Naive thymus-derived CD4-positive, alpha-beta T cell (primary cell): ENCODE measurements at regions of chrX and their contacts with region 1.

Region 1: GRCh38 chrX:42943051-42943974 is 165.3 kb upstream of the PPP1R2C start:
- DNase-seq: peak in 6 of 9 donors; percentile 22 to 50 (median 44)
- ATAC-seq: peak; percentile 60
- H3K4me3 ChIP-seq: peak overlapping the region; percentile 33
- H3K4me3 Mint-ChIP-seq: peak overlapping the region; percentile 41 to 83 (median 70)
- H3K27ac ChIP-seq: peak overlapping the region; percentile 56
- H3K27ac Mint-ChIP-seq: peak overlapping the region; percentile 77 to 98 (median 94)
- H3K4me1 ChIP-seq: peaks cover 58 to 84% of the 10 kb centered on the region in 2 donors
- H3K4me1 Mint-ChIP-seq: peaks cover 21 to 98% (median 88%) of the 10 kb centered on the region in 7 donors
- H3K27me3 ChIP-seq: no peaks in the 10 kb centered on the region
- H3K27me3 Mint-ChIP-seq: no peaks in the 10 kb centered on the region

Region 2: GRCh38 chrX:41781502-41781901 is 1161.8 kb before region 1 on chrX:
- CTCF ChIA-PET with region 1: no interaction called
- POLR2A ChIA-PET with region 1: no interaction called
- intact Hi-C with region 1: loop called in 1 of 2 experiments (anchors 5 kb)
- DNase-seq: peak in 6 of 9 donors; percentile 12 to 34 (median 24)
- ATAC-seq: peak; percentile 67
- H3K4me3 ChIP-seq: no peak overlapping the region
- H3K4me3 Mint-ChIP-seq: peak overlapping the region in 1 of 10 donors; percentile 6
- H3K27ac ChIP-seq: no peak overlapping the region
- H3K27ac Mint-ChIP-seq: peak overlapping the region in 1 of 9 donors; percentile 70
- H3K4me1 ChIP-seq: no peaks in the 10 kb centered on the region
- H3K4me1 Mint-ChIP-seq: peaks cover 0 to 24% (median 7%) of the 10 kb centered on the region in 7 donors
- H3K27me3 ChIP-seq: no peaks in the 10 kb centered on the region
- H3K27me3 Mint-ChIP-seq: no peaks in the 10 kb centered on the region

Region 3: DNA sequence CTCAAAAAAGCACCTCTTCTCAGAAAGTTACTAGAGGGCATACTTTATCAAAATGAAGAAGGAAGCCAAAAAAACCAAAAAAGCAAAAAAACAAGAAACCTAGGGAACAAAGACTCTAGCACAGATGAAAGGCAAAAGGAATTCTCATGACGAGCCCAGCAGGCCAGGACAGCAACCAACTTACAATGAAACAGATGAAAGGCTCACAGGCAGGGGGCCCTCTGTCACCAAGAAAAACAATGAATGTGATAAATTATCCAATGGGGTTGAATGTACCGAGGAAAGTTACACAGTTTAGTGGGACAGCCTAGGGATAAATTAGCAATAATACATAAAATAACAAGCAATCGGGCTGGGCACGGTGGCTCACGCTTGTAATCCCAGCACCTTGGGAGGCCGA is 1140.4 kb before region 1 on chrX:
- CTCF ChIA-PET with region 1: interaction called, 11 read pairs
- POLR2A ChIA-PET with region 1: interaction called, 5 read pairs
- intact Hi-C with region 1: loop called in 1 of 2 experiments (anchors 1 kb)
- DNase-seq: no peak
- ATAC-seq: no peak
- H3K4me3 ChIP-seq: no peak overlapping the region
- H3K4me3 Mint-ChIP-seq: no peak overlapping the region
- H3K27ac ChIP-seq: no peak overlapping the region
- H3K27ac Mint-ChIP-seq: peak overlapping the region in 1 of 9 donors; percentile 3
- H3K4me1 ChIP-seq: peaks cover 0 to 3% of the 10 kb centered on the region in 2 donors
- H3K4me1 Mint-ChIP-seq: peaks cover 5 to 45% (median 16%) of the 10 kb centered on the region in 7 donors
- H3K27me3 ChIP-seq: no peaks in the 10 kb centered on the region
- H3K27me3 Mint-ChIP-seq: no peaks in the 10 kb centered on the region

Region 4: GRCh38 chrX:42128020-42128419 is 815.3 kb before region 1 on chrX:
- CTCF ChIA-PET with region 1: no interaction called
- POLR2A ChIA-PET with region 1: no interaction called
- intact Hi-C with region 1: loop called in 1 of 2 experiments (anchors 10 kb)
- DNase-seq: peak in 1 of 9 donors; percentile 7
- ATAC-seq: peak; percentile 44
- H3K4me3 ChIP-seq: no peak overlapping the region
- H3K4me3 Mint-ChIP-seq: peak overlapping the region in 6 of 10 donors; percentile 2 to 72 (median 33)
- H3K27ac ChIP-seq: no peak overlapping the region
- H3K27ac Mint-ChIP-seq: peak overlapping the region in 7 of 9 donors; percentile 9 to 92 (median 62)
- H3K4me1 ChIP-seq: peaks cover 9 to 20% of the 10 kb centered on the region in 2 donors
- H3K4me1 Mint-ChIP-seq: peaks cover 13 to 73% (median 29%) of the 10 kb centered on the region in 7 donors
- H3K27me3 ChIP-seq: no peaks in the 10 kb centered on the region
- H3K27me3 Mint-ChIP-seq: no peaks in the 10 kb centered on the region

Region 5: DNA sequence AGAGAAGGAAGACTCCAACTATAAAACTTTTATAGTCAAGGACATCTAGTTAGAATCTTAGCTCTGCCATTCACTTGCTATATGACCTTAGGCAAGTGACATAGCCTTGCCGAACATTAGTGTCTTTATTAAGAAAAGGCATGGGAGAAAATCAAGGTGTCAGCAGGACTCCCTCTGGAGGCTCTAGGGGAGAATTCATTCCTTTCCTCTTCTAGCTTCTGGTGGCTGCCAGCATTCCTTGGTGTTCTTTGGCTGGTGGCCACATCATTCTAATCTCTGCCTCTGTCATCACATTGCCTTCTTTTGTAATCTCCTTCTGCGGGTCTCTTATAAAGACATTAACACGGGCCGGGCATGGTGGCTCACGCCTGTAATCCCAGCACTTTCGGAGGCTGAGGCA is 265.2 kb before region 1 on chrX:
- CTCF ChIA-PET with region 1: no interaction called
- POLR2A ChIA-PET with region 1: no interaction called
- intact Hi-C with region 1: loop called in 1 of 2 experiments (anchors 5 kb)
- DNase-seq: no peak
- ATAC-seq: no peak
- H3K4me3 ChIP-seq: no peak overlapping the region
- H3K4me3 Mint-ChIP-seq: no peak overlapping the region
- H3K27ac ChIP-seq: no peak overlapping the region
- H3K27ac Mint-ChIP-seq: no peak overlapping the region
- H3K4me1 ChIP-seq: no peaks in the 10 kb centered on the region
- H3K4me1 Mint-ChIP-seq: no peaks in the 10 kb centered on the region
- H3K27me3 ChIP-seq: no peaks in the 10 kb centered on the region
- H3K27me3 Mint-ChIP-seq: no peaks in the 10 kb centered on the region

Region 6: GRCh38 chrX:42857766-42858165 is 85.5 kb before region 1 on chrX:
- CTCF ChIA-PET with region 1: no interaction called
- POLR2A ChIA-PET with region 1: no interaction called
- intact Hi-C with region 1: no loop called
- DNase-seq: no peak
- ATAC-seq: no peak
- H3K4me3 ChIP-seq: no peak overlapping the region
- H3K4me3 Mint-ChIP-seq: no peak overlapping the region
- H3K27ac ChIP-seq: no peak overlapping the region
- H3K27ac Mint-ChIP-seq: peak overlapping the region in 1 of 9 donors; percentile 1
- H3K4me1 ChIP-seq: no peaks in the 10 kb centered on the region
- H3K4me1 Mint-ChIP-seq: peaks cover 0 to 6% (median 3%) of the 10 kb centered on the region in 7 donors
- H3K27me3 ChIP-seq: no peaks in the 10 kb centered on the region
- H3K27me3 Mint-ChIP-seq: no peaks in the 10 kb centered on the region

Region 7: DNA sequence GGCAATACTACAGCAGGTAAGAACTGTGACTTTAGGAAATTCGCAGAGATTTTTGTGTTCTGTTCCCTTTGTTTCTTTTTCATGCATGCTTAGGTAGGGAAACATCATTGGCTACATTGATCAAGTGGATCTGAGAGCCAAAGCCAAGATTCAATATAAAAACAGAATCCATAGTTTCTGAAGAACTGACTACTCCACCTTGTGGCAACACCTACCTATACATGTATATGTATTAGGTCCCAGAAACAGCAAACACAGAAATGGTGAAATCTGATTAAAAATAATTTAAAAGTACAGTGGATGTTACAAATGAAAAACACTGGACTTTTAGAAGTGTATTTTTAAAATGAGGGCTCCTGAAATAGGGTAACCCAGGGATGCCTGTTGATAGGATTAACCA is 390.2 kb after region 1 on chrX:
- CTCF ChIA-PET with region 1: no interaction called
- POLR2A ChIA-PET with region 1: no interaction called
- intact Hi-C with region 1: loop called in 1 of 2 experiments (anchors 10 kb)
- DNase-seq: no peak
- ATAC-seq: no peak
- H3K4me3 ChIP-seq: no peak overlapping the region
- H3K4me3 Mint-ChIP-seq: no peak overlapping the region
- H3K27ac ChIP-seq: no peak overlapping the region
- H3K27ac Mint-ChIP-seq: no peak overlapping the region
- H3K4me1 ChIP-seq: peaks cover 0 to 3% of the 10 kb centered on the region in 2 donors
- H3K4me1 Mint-ChIP-seq: no peaks in the 10 kb centered on the region
- H3K27me3 ChIP-seq: no peaks in the 10 kb centered on the region
- H3K27me3 Mint-ChIP-seq: no peaks in the 10 kb centered on the region

Region 8: GRCh38 chrX:43654431-43655150 is 711.3 kb after region 1 on chrX:
- CTCF ChIA-PET with region 1: no interaction called
- POLR2A ChIA-PET with region 1: no interaction called
- intact Hi-C with region 1: loop called in 1 of 2 experiments (anchors 10 kb)
- DNase-seq: peak; percentile 77 to 90 (median 85)
- ATAC-seq: peak; percentile 97
- H3K4me3 ChIP-seq: peak overlapping the region; percentile 71
- H3K4me3 Mint-ChIP-seq: peak overlapping the region; percentile 84 to 93 (median 90)
- H3K27ac ChIP-seq: peak overlapping the region; percentile 71
- H3K27ac Mint-ChIP-seq: peak overlapping the region; percentile 88 to 100 (median 98)
- H3K4me1 ChIP-seq: no peaks in the 10 kb centered on the region
- H3K4me1 Mint-ChIP-seq: peaks cover 0 to 10% (median 6%) of the 10 kb centered on the region in 7 donors
- H3K27me3 ChIP-seq: no peaks in the 10 kb centered on the region
- H3K27me3 Mint-ChIP-seq: peaks cover 0 to 21% (median 0%) of the 10 kb centered on the region in 5 donors